Activated CD4-positive, alpha-beta memory T cell treated with anti-CD3 and anti-CD28 coated beads, Interleukin-2, amount 10 ng/mL, durations not matched to agents 7 days and 5 days (primary cell): ENCODE measurements at regions of chr12 and their contacts with region 1.

Region 1: DNA sequence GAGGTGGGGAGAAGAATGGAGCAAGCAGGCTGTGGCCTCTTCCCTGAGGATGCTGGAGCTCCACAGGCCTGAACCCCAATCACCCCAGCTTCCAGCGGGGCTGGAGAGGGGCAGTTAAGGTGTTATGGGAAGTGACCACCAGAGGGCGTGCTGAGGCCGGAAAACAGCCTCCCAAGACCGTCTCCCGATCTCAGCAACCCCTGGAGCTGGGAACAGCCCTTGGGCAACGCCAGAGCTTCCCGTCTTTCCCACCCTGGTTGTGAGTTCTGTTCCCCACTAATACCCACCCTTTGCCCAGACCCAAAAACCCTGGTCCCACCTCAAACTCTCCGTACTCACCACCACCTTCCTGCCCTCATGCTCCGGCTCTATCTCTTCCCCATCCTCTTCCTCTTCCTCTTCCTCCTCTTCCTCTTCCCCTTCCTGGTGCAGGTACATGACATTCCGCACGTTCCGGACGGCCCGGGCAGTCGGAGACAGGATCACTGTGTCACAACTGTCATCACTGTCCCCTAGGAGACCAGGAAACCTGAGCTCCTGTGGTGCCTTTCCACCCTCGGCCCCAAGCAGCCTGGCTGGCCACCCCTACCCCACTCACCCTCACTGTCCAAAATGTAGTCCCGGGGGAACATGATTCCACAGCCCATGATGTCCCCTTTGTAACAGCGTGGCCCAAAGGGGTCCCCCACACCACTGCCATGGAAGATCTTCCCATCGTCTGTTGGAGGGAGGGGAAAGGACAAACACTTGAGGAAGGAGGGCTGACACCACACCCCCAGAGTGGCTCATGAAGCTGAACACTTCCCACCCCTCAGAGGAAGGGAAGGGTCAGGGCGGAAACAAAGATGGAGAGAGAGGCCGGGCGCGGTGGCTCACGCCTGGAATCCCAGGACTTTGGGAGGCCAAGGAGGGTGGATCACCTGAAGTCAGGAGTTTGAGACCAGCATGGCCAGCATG is 12.9 kb downstream of the SPRYD3 start:
- DNase-seq: peak; percentile 73
- H3K4me3 Mint-ChIP-seq: no peak overlapping the region
- H3K27ac Mint-ChIP-seq: no peak overlapping the region
- H3K4me1 Mint-ChIP-seq: peaks cover 9% of the 10 kb centered on the region
- H3K27me3 Mint-ChIP-seq: no peaks in the 10 kb centered on the region

Region 2: GRCh38 chr12:53054112-53054833 is 12.0 kb before region 1 on chr12:
- CTCF ChIA-PET with region 1: interaction called, 47 read pairs
- POLR2A ChIA-PET with region 1: interaction called, 12 read pairs
- DNase-seq: peak; percentile 94
- H3K4me3 Mint-ChIP-seq: peak overlapping the region; percentile 87
- H3K27ac Mint-ChIP-seq: peak overlapping the region; percentile 77
- H3K4me1 Mint-ChIP-seq: peaks cover 14% of the 10 kb centered on the region
- H3K27me3 Mint-ChIP-seq: no peaks in the 10 kb centered on the region

Region 3: GRCh38 chr12:53079226-53080117 is 13.2 kb after region 1 on chr12 and contains the start of gene SPRYD3:
- CTCF ChIA-PET with region 1: interaction called, 82 read pairs
- POLR2A ChIA-PET with region 1: interaction called, 25 read pairs
- DNase-seq: peak; percentile 98
- H3K4me3 Mint-ChIP-seq: peak within 1 kb of the TSS; percentile 86
- H3K27ac Mint-ChIP-seq: peak within 1 kb of the TSS; percentile 83
- H3K4me1 Mint-ChIP-seq: peaks cover 38% of the 10 kb centered on the region
- H3K27me3 Mint-ChIP-seq: no peaks in the 10 kb centered on the region
- total RNA-seq, gene SPRYD3: 31.2 to 31.3 TPM

Region 4: GRCh38 chr12:53086361-53086760 is 20.1 kb after region 1 on chr12:
- CTCF ChIA-PET with region 1: interaction called, 82 read pairs
- POLR2A ChIA-PET with region 1: no interaction called
- DNase-seq: no peak
- H3K4me3 Mint-ChIP-seq: no peak overlapping the region
- H3K27ac Mint-ChIP-seq: no peak overlapping the region
- H3K4me1 Mint-ChIP-seq: peaks cover 4% of the 10 kb centered on the region
- H3K27me3 Mint-ChIP-seq: peaks cover 20% of the 10 kb centered on the region

Region 5: GRCh38 chr12:53093777-53094393 is 27.6 kb after region 1 on chr12:
- CTCF ChIA-PET with region 1: interaction called, 236 read pairs
- POLR2A ChIA-PET with region 1: interaction called, 45 read pairs
- DNase-seq: no peak
- H3K4me3 Mint-ChIP-seq: no peak overlapping the region
- H3K27ac Mint-ChIP-seq: no peak overlapping the region
- H3K4me1 Mint-ChIP-seq: peaks cover 18% of the 10 kb centered on the region
- H3K27me3 Mint-ChIP-seq: peaks cover 22% of the 10 kb centered on the region

Region 6: DNA sequence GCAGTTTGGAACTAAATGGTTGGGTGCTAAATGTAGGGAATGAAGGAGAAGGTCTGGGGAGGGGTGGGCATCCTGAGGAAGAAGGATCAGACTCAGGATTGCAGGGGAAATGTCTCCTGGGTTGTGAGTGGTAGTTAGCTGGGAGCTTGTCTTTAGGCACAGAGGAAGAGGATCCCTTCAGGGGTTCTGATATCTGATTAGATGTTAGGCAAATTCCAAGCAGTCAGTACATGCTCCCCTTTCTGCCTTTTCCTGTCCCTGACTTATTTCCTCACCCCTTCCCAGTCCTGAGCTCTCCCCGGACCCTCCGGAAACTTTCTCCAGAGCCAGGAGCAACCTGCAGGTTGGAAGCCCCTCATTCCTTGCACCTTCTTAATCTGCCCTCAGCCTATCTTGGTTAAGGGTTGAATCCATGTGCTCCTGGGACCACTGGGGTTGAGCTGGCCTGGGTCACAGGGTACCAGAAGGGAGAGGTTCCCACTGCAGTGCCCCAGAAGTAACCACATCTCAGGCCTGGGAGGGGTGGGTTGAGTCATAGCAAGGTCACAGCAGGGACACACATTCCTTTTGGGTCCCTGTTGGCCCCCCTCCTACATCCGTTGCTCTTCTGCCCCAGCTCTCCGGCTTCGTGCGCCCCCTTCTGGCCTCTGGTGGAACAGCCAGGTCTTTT is 32.9 kb after region 1 on chr12:
- CTCF ChIA-PET with region 1: interaction called, 236 read pairs
- POLR2A ChIA-PET with region 1: interaction called, 45 read pairs
- DNase-seq: peak; percentile 90
- H3K4me3 Mint-ChIP-seq: peak overlapping the region; percentile 71
- H3K27ac Mint-ChIP-seq: peak overlapping the region; percentile 69
- H3K4me1 Mint-ChIP-seq: peaks cover 52% of the 10 kb centered on the region
- H3K27me3 Mint-ChIP-seq: peaks cover 15% of the 10 kb centered on the region

Region 7: GRCh38 chr12:53180220-53180930 is 114.1 kb after region 1 on chr12 and contains the starts of genes CSAD and ZNF740:
- CTCF ChIA-PET with region 1: interaction called, 10 read pairs
- POLR2A ChIA-PET with region 1: interaction called, 6 read pairs
- DNase-seq: peak; percentile 98
- H3K4me3 Mint-ChIP-seq: peak within 1 kb of the TSS; percentile 84
- H3K27ac Mint-ChIP-seq: peak within 1 kb of the TSS; percentile 93
- H3K4me1 Mint-ChIP-seq: peaks cover 58% of the 10 kb centered on the region
- H3K27me3 Mint-ChIP-seq: no peaks in the 10 kb centered on the region
- total RNA-seq, gene CSAD: 28.6 to 31.0 TPM
- total RNA-seq, gene ZNF740: 33.7 to 45.5 TPM